IMR-90 (cell line): ENCODE measurements at regions of chr13 and their contacts with region 1.

Region 1: GRCh38 chr13:49110122-49110912 is 109.8 kb upstream of the MLNR start:
- DNase-seq: peak; percentile 91
- ATAC-seq: peak; percentile 75
- H3K4me3 ChIP-seq: peak overlapping the region; percentile 84
- H3K27ac ChIP-seq: peak overlapping the region; percentile 75; the same call in 1 of the 2 replicates
- H3K4me1 ChIP-seq: peaks cover 3% of the 10 kb centered on the region
- H3K27me3 ChIP-seq: no peaks in the 10 kb centered on the region
- CTCF ChIP-seq: no peak
- POLR2A ChIP-seq: no peak
- RAD21 ChIP-seq: no peak

Region 2: DNA sequence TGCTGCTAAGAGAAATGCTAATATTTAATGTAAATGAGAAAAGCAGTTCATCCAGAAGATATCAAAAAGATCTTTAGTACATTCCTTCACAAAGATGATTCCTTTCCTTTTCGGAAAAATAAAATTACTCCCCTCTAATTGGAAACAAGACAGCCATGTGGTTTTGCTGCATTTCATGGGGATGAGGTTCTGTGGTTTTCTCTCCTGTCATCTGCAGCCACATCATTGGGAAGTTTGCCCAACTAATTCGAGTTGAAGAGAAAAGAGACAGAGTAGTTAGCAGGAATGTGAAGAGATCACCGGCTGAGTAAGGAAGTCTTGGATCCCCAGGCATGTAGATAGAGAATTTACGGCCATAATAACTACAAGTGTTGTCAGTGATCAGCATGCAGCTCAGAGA is 334.5 kb before region 1 on chr13:
- CTCF ChIA-PET with region 1: no interaction called
- POLR2A ChIA-PET with region 1: no interaction called
- dilution Hi-C with region 1: no loop called
- in situ Hi-C with region 1: no loop called
- intact Hi-C with region 1: loop called (anchors 10 kb)
- DNase-seq: peak; percentile 97
- ATAC-seq: peak; percentile 64
- H3K4me3 ChIP-seq: no peak overlapping the region
- H3K27ac ChIP-seq: peak overlapping the region; percentile 1; the same call in 1 of the 2 replicates
- H3K4me1 ChIP-seq: peaks cover 20% of the 10 kb centered on the region
- H3K27me3 ChIP-seq: no peaks in the 10 kb centered on the region
- CTCF ChIP-seq: no peak
- POLR2A ChIP-seq: 0 out of 2 replicates have a peak, but pooled peaks have one; percentile 18
- RAD21 ChIP-seq: no peak